ENCODE measurements at regions of chr2 and their contacts with region 1.

Region 1: DNA sequence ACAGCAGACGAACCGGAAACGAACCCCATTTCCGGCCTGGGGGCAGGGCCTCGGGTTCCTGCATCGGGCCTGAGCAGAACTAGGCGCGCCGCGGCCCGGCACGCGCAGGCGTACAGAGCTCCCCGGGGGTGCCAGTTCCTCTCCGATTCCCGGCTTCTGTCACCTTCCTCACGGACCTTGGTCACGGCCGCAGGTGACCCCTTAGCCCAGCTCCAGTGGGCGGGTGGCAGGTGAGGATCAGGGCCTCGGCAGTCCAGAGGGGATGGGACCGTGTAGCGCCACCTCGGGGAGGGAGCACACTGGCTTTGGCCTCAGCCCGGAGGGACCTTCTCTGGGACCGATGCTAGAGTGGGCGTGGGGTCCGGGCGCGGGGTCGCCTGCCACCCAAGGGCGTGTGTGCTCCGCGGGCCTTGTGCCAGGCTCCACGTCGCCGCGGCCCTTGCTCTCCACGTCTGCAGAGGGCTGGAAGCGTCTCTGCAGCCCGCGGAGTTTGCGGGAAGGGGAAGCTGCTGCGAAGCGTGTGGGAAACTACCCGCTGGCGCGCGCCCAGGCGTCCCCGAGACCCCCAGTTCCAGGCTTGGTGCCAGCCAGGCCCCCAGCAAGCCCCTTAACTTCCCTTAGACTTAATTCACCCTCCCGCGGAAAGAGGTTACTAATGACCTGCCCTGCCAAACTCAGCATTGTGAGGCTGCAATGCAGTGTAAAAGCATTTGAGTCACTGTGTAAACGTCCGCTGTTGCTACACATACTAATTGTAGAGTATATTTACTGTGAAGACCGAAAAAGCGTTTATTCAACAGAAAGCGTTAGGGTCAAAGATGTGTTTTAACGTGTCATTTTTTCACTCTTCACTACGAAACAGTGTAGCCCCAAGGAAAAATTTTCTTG is at the start of gene TRAPPC12:
- DNase-seq: peak; percentile 57 to 95
- H3K4me3 ChIP-seq: peak within 1 kb of the TSS; percentile 77 to 81
- H3K27ac ChIP-seq: peak within 1 kb of the TSS; percentile 86 to 95
- H3K4me1 ChIP-seq: peaks cover 3 to 19% of the 10 kb centered on the region in 2 donors
- H3K27me3 ChIP-seq: no peaks in the 10 kb centered on the region
- CTCF ChIP-seq: peak in 2 of 3 experiments; percentile 20 to 54
- total RNA-seq, gene TRAPPC12: 94.0 TPM

Region 2: DNA sequence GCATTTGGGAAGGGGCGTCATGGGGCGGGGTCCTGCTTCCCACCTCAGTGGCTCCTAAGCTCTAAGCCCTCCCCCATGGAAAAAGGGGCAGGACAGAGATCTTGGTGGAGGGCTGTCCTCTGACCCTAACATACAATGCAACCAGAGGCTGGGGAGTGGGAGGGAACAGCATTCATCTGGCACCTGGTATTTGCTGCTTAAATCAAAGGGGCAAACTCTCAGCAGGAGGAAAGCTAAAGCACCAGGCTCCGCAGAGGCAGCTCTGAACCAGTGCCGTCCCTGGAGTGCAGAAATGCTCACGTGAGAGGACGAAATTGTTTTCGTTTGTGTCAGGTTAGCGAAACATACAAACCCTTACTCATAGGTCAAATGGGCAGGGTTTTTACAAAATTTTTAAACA is 1542.9 kb before region 1 on chr2:
- intact Hi-C with region 1: loop called (anchors 10 kb)
- DNase-seq: no peak
- H3K4me3 ChIP-seq: no peak overlapping the region
- H3K27ac ChIP-seq: peak overlapping the region; percentile 39 to 73
- H3K4me1 ChIP-seq: peaks cover 4 to 30% of the 10 kb centered on the region in 2 donors
- H3K27me3 ChIP-seq: no peaks in the 10 kb centered on the region
- CTCF ChIP-seq: no peak

Region 3: GRCh38 chr2:3461801-3462492 is 82.1 kb after region 1 on chr2:
- intact Hi-C with region 1: loop called (anchors 5 kb)
- DNase-seq: peak in 1 of 2 donors; percentile 63
- H3K4me3 ChIP-seq: peak overlapping the region in 1 of 2 donors; percentile 32
- H3K27ac ChIP-seq: peak overlapping the region; percentile 78 to 90
- H3K4me1 ChIP-seq: peaks cover 6 to 7% of the 10 kb centered on the region in 2 donors
- H3K27me3 ChIP-seq: no peaks in the 10 kb centered on the region
- CTCF ChIP-seq: peak; percentile 54 to 97 (median 81)

Region 4: DNA sequence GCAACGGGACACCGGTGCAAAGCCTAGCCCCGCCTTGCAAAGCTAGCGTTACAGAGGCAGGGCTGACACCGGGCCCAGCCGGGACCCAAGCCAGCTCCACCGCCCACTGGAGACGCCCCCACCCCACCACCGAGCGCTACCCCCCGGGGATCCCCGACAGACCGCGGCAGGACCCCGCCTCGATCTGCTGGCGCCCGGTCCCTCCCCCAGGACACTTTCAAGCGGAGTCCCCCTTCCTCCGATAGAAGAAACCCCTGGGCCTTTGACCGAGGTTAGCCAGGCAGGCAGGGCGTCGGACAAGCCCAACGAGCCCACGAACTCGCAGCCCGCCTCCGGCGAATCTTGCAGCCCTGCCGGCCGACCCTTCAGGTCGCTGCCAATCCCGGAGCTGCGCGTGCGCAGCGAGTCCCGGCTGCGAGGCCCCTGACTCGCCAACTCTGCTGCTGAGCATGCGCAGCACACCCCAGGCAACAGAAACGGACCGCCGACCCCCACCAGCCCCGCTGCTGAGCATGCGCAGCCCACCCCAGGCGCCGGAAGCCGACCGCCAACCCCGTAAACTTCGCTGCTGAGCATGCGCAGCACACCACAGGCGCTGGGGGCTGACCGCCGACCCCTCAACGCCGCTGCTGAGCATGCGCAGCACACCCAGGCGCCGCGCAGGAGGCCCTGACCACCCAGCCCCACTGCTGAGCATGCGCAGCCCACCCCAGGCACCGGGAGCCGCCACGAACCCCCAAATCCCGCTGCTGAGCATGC is 138.8 kb after region 1 on chr2:
- intact Hi-C with region 1: loop called (anchors 2 kb)
- DNase-seq: peak; percentile 91 to 98
- H3K4me3 ChIP-seq: peak overlapping the region; percentile 84 to 93
- H3K27ac ChIP-seq: peak overlapping the region; percentile 97 to 100
- H3K4me1 ChIP-seq: peaks cover 4 to 18% of the 10 kb centered on the region in 2 donors
- H3K27me3 ChIP-seq: no peaks in the 10 kb centered on the region
- CTCF ChIP-seq: no peak

Region 5: DNA sequence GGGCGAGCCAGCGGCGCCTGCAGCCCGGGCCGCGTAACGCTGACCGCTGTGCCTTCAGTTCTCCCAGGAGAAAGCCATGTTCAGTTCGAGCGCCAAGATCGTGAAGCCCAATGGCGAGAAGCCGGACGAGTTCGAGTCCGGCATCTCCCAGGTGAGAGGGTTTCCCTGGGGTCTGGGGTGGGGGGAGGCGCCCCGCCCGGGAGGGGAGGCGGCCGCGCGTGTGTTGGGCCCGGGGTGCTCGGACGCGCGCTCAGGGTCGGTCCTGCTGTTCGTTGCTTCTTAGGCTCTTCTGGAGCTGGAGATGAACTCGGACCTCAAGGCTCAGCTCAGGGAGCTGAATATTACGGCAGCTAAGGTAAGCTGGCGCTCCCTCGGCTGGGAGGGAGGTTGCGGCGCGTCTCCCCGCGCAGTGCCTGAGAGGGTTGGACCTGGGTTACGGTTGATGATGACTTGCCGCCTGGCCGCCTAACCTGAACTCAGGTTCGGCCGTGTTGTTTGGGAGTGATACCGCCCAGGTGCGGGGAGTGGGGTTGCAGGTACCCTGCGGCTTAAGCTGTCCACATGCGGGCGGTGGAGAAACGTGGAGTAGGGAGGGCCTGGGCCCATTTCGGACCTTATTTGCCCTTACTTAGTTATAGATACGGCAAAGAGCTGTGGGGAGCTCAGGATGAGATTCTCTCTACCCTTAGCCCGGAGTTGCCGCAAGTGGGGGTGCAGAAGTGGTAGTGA is 195.8 kb after region 1 on chr2:
- intact Hi-C with region 1: loop called (anchors 1 kb)
- DNase-seq: no peak
- H3K4me3 ChIP-seq: peak overlapping the region; percentile 73 to 89
- H3K27ac ChIP-seq: peak overlapping the region; percentile 88 to 94
- H3K4me1 ChIP-seq: peaks cover 9 to 11% of the 10 kb centered on the region in 2 donors
- H3K27me3 ChIP-seq: no peaks in the 10 kb centered on the region
- CTCF ChIP-seq: no peak